Thyroid gland (tissue), 4 donors: ENCODE measurements at regions of chr6 and their contacts with region 1.

Region 1: DNA sequence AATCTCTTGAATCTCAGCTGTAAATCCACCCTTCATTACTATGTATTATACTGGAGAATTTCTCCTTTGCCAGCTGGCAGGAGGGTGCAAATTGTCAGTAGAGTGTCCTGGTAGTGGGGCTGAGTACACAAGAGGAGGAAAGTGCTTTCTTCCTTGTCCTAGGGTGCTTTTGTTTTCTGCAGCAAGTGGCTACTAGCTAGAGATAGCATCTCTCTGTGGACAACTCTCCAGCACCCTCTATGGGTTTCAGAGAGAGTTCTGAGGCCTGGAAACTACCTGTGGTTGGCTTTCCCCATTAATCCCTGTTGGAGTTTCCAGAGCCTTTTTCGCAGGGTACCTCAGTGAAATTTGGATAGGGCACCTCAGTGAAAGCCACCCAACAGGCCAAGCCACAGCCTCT is 422.5 kb upstream of the RGS17 start:
- DNase-seq: peak; percentile 54 to 56
- H3K4me3 ChIP-seq: no peak overlapping the region
- H3K27ac ChIP-seq: no peak overlapping the region
- H3K4me1 ChIP-seq: peaks cover 0 to 4% of the 10 kb centered on the region in 2 donors
- H3K27me3 ChIP-seq: no peaks in the 10 kb centered on the region
- CTCF ChIP-seq: peak in 5 of 6 experiments; percentile 17 to 79 (median 74)
- POLR2A ChIP-seq: no peak

Region 2: DNA sequence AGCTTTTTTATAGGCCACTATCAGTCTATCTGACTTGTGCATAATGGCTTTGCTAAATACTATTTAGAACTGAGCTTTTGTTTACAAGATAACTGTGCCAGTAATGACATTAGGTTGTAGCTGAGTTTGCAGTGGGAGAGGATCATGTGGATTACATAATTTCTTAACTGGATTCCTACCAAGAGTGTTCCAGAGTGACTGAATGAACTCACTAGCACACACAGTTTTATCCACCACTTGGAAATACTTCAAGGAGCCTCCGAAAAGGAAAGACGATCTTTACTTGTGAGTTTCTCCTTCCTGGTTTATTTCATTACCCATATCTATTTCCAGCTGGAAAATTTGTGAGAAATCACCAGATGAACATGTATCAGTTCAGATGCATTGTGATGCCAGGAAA is 905.5 kb before region 1 on chr6:
- intact Hi-C with region 1: no loop called
- DNase-seq: no peak
- H3K4me3 ChIP-seq: no peak overlapping the region
- H3K27ac ChIP-seq: no peak overlapping the region
- H3K4me1 ChIP-seq: no peaks in the 10 kb centered on the region
- H3K27me3 ChIP-seq: no peaks in the 10 kb centered on the region
- CTCF ChIP-seq: no peak
- POLR2A ChIP-seq: no peak

Region 3: DNA sequence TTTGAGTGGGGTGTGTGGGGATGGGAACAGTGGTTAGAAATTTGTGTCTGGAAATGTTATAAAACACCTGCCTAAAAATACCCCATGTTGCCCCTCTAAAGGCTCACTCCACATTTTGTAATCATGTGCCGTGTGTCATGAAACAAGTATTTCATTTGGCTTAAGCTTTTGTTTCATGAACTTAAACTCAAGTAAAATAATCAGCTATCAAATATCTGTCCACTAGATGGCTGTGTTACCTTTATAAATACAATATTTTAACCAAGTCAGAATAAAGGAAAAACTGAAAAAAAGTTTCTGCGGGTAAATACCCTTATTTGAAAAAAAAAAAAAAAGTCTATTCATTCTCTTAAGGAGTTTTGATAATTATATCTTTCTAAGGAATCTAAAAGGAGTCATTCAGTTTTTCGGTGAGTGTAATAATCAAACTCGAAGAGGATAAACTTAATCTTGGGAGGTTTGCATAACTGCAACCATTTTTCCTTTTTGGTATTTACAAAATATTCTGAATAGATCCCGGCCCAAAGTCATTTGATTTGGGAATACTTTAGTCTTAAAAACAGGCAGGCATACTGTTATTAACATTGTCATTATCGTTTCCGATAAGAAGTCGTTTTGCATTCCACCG is 521.3 kb before region 1 on chr6:
- intact Hi-C with region 1: loop called (anchors 5 kb)
- DNase-seq: no peak
- H3K4me3 ChIP-seq: no peak overlapping the region
- H3K27ac ChIP-seq: no peak overlapping the region
- H3K4me1 ChIP-seq: no peaks in the 10 kb centered on the region
- H3K27me3 ChIP-seq: no peaks in the 10 kb centered on the region
- CTCF ChIP-seq: peak in 3 of 6 experiments; percentile 46 to 69 (median 58)
- POLR2A ChIP-seq: no peak

Region 4: DNA sequence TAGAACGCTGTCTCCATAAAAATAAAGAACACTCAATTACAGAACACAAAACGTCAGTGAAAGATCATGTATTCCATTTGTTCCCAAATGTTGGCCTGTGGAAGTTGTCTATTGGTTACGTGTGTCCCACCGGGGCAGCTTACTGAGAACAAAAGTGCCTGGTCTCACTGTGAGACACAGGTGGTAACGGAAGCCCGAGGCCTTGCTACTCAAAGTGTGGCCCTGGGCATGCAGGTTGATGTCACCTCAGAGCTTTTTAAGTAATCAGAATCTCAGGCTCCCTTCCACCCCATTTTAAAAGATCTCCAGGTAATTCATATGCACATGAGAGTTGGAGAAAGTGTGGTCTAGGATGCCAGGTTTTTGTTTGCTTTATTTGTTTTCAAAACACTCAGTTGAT is 62.9 kb after region 1 on chr6:
- intact Hi-C with region 1: no loop called
- DNase-seq: no peak
- H3K4me3 ChIP-seq: no peak overlapping the region
- H3K27ac ChIP-seq: no peak overlapping the region
- H3K4me1 ChIP-seq: no peaks in the 10 kb centered on the region
- H3K27me3 ChIP-seq: no peaks in the 10 kb centered on the region
- CTCF ChIP-seq: no peak
- POLR2A ChIP-seq: no peak

Region 5: GRCh38 chr6:153668758-153669157 is 115.1 kb after region 1 on chr6:
- intact Hi-C with region 1: no loop called
- DNase-seq: no peak
- H3K4me3 ChIP-seq: no peak overlapping the region
- H3K27ac ChIP-seq: no peak overlapping the region
- H3K4me1 ChIP-seq: no peaks in the 10 kb centered on the region
- H3K27me3 ChIP-seq: no peaks in the 10 kb centered on the region
- CTCF ChIP-seq: no peak
- POLR2A ChIP-seq: no peak